ENCODE measurements at regions of chr3 and their contacts with region 1.

Region 1: GRCh38 chr3:184727357-184728009 is 15.6 kb upstream of the MAGEF1 start:
- DNase-seq: peak; percentile 81 to 87 (median 82)
- H3K4me3 ChIP-seq: no peak overlapping the region
- H3K27ac ChIP-seq: no peak overlapping the region
- H3K4me1 ChIP-seq: no peaks in the 10 kb centered on the region
- H3K27me3 ChIP-seq: no peaks in the 10 kb centered on the region

Region 2: DNA sequence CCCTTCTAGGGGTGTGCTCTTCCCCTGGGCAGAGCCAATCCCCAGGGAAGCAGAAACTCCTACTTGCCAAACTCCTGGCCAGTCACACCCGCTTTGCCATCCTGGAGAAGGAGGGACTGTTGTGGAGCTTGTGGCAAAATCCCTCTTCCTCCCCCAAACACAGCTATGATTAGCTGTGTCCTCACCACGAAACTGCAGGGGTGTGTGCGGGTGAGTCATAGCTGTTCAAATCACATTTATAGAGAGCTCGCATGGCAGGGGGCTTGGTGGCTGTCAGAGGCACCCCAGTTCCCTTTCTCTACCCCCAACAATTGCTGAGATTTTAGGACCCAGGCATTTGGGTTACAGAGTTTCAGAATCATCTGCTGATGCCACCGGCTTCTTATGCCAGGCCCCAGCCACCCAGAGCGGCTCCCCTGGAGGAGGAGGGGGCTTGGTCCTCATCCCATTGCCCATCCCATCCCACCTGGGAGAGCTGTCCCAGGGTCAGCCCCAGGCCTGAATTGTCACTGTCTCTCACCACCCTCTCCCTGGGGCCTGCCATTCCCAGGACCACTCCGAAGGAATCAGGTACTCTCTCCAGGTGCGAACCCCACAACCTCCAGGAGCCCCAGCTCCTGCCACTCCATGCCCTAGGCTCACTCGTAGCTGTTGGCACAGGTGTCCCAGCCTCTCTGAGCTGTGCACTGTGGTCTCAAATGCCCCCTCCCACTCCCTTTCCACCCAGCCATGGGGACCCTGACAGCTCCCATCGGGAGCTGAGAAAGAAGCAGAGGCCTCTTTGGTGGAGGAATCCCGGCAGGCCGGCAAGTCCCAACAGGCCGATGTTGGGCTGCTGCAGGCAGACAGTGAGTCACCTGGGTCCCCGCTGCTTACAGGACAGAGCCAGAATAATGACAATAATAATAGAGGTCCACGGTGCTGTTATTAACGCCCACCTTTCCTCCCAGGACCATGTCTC is 13.3 kb after region 1 on chr3:
- CTCF ChIA-PET with region 1: interaction called, 73 read pairs
- POLR2A ChIA-PET with region 1: no interaction called
- DNase-seq: peak; percentile 7 to 62 (median 41)
- H3K4me3 ChIP-seq: no peak overlapping the region
- H3K27ac ChIP-seq: no peak overlapping the region
- H3K4me1 ChIP-seq: peaks cover 0 to 4% (median 0%) of the 10 kb centered on the region in 4 experiments
- H3K27me3 ChIP-seq: peaks cover 0 to 1% (median 0%) of the 10 kb centered on the region in 5 experiments

Measured in common myeloid progenitor, CD34-positive (primary cell).